ENCODE measurements at regions of chr2 and their contacts with region 1.

Region 1: DNA sequence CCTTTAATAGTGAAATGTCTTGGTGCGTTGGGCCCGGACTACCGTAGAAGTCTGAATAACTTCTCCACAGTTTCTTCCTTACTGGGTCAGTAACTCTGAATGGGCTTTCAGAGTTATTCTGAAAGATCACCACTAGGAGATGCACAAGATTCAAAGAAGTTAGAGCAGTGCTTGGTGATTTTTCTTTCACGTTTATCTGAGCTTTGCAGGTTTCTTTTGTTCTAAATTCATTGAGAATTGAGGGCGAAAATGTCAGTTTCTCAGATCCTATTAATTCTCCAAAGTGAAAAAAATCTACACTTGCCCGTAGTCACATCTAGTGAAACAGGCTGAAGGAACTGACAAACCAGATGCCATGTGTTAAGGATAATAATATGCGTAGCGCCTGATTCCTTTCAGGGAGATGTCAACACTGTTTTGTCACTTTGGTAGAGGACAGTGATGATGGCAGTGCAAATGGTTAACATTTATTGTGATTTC is 70.1 kb downstream of the QPCT start:
- DNase-seq: peak; percentile 70
- H3K4me3 ChIP-seq: no peak overlapping the region
- H3K27ac ChIP-seq: no peak overlapping the region
- H3K4me1 ChIP-seq: no peaks in the 10 kb centered on the region
- H3K27me3 ChIP-seq: no peaks in the 10 kb centered on the region
- CTCF ChIP-seq: peak; percentile 84

Region 2: GRCh38 chr2:37489041-37489456 is 74.5 kb after region 1 on chr2:
- CTCF ChIA-PET with region 1: interaction called, 11 read pairs
- POLR2A ChIA-PET with region 1: no interaction called
- intact Hi-C with region 1: no loop called
- DNase-seq: peak; percentile 3
- H3K4me3 ChIP-seq: no peak overlapping the region
- H3K27ac ChIP-seq: no peak overlapping the region
- H3K4me1 ChIP-seq: peaks cover 4% of the 10 kb centered on the region
- H3K27me3 ChIP-seq: no peaks in the 10 kb centered on the region
- CTCF ChIP-seq: no peak

Region 3: GRCh38 chr2:37672104-37672869 is 257.8 kb after region 1 on chr2:
- CTCF ChIA-PET with region 1: no interaction called
- POLR2A ChIA-PET with region 1: no interaction called
- intact Hi-C with region 1: loop called (anchors 5 kb)
- DNase-seq: peak; percentile 87
- H3K4me3 ChIP-seq: peak overlapping the region; percentile 93
- H3K27ac ChIP-seq: peak overlapping the region; percentile 60
- H3K4me1 ChIP-seq: peaks cover 9% of the 10 kb centered on the region
- H3K27me3 ChIP-seq: no peaks in the 10 kb centered on the region
- CTCF ChIP-seq: no peak

Region 4: DNA sequence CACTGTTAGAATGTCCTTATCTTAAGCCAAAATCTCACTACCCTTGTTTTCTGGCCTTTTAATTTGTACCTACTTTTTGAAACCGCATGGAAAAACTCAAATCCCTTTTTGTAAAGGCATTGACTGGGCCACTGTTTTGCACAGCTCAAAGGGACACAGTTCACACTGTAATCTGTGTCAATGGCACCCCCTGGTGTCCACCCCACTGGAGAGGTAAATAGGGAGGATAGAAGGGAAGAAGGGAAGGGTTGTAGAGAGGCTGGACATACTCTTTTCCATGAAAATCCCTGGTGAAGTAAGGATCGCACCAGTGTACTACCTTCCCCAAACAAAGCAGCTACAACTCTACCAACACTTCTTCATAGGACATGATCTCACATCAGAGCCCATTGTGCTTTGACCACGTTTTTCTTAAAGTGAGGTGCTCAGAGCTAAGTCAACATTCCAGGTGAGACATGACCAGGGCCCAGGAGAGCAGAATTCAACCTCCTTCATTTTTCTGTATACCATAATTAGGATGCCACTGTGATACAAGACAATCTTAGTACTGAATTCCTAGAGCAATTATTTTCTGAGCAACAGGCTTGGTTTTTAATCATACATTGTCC is 418.2 kb after region 1 on chr2:
- CTCF ChIA-PET with region 1: interaction called, 55 read pairs
- POLR2A ChIA-PET with region 1: no interaction called
- intact Hi-C with region 1: loop called (anchors 1 kb)
- DNase-seq: peak; percentile 83
- H3K4me3 ChIP-seq: no peak overlapping the region
- H3K27ac ChIP-seq: no peak overlapping the region
- H3K4me1 ChIP-seq: peaks cover 13% of the 10 kb centered on the region
- H3K27me3 ChIP-seq: no peaks in the 10 kb centered on the region
- CTCF ChIP-seq: peak; percentile 75

Region 5: DNA sequence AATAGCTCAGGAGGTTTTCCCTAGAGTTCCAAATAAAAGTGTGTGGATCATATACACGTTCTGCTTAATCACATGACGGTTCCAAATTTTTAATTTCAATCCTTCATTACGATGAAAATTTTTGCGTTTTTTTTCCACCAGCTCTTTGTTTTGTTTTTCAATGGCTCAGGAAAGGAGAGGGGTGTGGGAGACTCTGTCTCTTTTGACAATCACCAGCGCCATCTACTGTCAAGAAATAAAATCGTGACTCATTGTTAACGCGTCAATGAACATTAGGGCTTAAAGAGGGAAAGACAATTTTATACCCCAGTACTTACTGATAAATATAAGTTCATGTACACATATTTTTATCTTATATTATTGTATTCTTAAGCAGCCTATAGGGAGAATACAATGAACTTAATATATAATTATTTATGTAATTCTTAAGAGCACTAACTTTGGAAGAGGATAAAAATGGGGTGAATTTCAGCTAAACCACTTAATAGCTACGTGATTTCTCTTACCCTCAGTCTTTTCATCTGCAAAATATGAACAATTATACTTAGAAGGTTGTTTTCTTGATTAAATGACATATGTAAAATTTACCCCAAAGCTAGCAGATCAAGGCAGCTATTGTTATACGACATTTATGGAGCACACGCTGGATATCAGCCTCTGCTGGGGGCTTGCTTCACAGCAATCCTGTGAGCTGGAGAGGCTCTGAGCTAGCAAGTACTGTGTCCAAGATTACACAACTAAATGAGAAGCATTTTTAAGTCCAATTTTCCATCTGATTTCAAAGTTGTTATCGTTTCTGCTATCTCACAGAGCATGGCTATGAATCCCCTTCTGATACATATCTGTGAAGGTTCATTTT is 463.2 kb after region 1 on chr2:
- CTCF ChIA-PET with region 1: interaction called, 59 read pairs
- POLR2A ChIA-PET with region 1: no interaction called
- intact Hi-C with region 1: loop called (anchors 2 kb)
- DNase-seq: peak; percentile 75
- H3K4me3 ChIP-seq: no peak overlapping the region
- H3K27ac ChIP-seq: no peak overlapping the region
- H3K4me1 ChIP-seq: peaks cover 3% of the 10 kb centered on the region
- H3K27me3 ChIP-seq: peaks cover 17% of the 10 kb centered on the region
- CTCF ChIP-seq: peak; percentile 77

Region 6: GRCh38 chr2:38076606-38077430 is 662.3 kb after region 1 on chr2:
- CTCF ChIA-PET with region 1: interaction called, 10 read pairs
- POLR2A ChIA-PET with region 1: no interaction called
- intact Hi-C with region 1: no loop called
- DNase-seq: peak; percentile 81
- H3K4me3 ChIP-seq: peak overlapping the region; percentile 55
- H3K27ac ChIP-seq: peak overlapping the region; percentile 68
- H3K4me1 ChIP-seq: peaks cover 6% of the 10 kb centered on the region
- H3K27me3 ChIP-seq: no peaks in the 10 kb centered on the region
- CTCF ChIP-seq: peak; percentile 63

Region 7: GRCh38 chr2:38128653-38129052 is 714.1 kb after region 1 on chr2:
- CTCF ChIA-PET with region 1: no interaction called
- POLR2A ChIA-PET with region 1: no interaction called
- intact Hi-C with region 1: no loop called
- DNase-seq: no peak
- H3K4me3 ChIP-seq: no peak overlapping the region
- H3K27ac ChIP-seq: no peak overlapping the region
- H3K4me1 ChIP-seq: peaks cover 4% of the 10 kb centered on the region
- H3K27me3 ChIP-seq: no peaks in the 10 kb centered on the region
- CTCF ChIP-seq: no peak

Region 8: DNA sequence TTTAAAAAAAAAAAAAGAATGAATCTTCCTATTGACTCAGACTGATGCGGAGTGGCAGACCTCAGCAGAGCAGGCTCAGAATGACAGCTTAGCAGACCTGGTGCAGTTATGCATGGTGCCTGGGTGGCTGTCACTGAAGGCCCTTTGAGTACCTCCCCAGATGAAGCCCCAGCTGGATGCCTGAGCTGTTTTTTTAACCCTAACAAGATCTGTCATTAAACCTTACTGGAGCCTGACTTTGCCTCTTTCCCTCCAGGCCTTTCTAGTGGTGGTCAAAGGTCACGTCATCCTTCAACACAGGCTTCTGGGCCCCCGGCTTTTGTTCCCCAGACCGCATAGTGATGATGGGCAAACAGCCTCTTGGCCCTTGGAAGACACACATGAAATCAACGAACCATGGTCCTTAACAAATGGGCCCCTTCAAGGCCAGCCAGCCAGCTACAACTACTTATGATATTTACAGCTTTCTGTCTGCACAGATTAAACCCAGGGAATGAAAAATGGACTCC is 799.8 kb after region 1 on chr2:
- CTCF ChIA-PET with region 1: no interaction called
- POLR2A ChIA-PET with region 1: no interaction called
- intact Hi-C with region 1: no loop called
- DNase-seq: no peak
- H3K4me3 ChIP-seq: no peak overlapping the region
- H3K27ac ChIP-seq: no peak overlapping the region
- H3K4me1 ChIP-seq: no peaks in the 10 kb centered on the region
- H3K27me3 ChIP-seq: no peaks in the 10 kb centered on the region
- CTCF ChIP-seq: no peak